ENCODE measurements at regions of chr4 and their contacts with region 1.

Region 1: DNA sequence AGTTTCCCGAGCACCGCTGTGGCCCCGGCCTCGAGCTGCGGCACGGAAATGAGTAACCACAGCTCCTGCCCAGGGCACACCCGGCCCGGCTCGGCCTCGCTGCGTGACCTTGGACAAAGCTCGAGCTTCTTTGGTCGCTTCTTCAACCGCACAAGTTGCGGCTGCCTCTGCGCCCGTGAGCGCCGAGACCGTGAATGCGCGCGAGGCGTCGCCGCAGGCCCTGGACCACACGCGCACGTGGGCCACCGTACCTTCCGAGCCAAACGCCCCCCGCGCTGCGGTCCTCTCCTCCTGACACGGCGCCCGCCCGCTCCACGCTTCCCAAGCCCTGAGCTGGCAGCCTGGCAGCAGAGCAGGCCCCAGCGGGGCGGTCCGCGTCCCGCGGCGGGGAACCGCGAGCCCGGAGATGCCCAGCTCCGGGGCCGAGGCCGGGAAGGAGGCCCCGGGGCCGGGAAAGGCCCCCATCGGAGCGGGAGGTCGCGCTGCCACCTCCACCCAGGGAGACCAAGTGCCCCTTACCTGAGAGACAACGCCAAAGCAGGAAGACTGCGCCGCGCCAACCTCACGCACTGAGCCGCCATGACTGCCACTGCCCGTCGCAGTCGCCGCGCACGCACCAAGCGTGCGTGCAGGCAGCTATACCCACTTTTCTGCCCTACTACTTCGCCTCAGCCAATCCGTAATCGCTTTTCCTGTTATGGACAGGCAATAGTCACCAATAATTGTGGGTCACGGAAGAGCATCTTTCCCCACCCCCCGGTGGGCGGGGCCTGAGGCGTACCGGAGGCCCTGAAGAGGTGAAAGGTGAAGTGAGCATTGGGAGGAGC is at the start of gene GRPEL1:
- DNase-seq: peak; percentile 96
- H3K4me3 ChIP-seq: peak within 1 kb of the TSS; percentile 89
- CTCF ChIP-seq: no peak

Region 2: DNA sequence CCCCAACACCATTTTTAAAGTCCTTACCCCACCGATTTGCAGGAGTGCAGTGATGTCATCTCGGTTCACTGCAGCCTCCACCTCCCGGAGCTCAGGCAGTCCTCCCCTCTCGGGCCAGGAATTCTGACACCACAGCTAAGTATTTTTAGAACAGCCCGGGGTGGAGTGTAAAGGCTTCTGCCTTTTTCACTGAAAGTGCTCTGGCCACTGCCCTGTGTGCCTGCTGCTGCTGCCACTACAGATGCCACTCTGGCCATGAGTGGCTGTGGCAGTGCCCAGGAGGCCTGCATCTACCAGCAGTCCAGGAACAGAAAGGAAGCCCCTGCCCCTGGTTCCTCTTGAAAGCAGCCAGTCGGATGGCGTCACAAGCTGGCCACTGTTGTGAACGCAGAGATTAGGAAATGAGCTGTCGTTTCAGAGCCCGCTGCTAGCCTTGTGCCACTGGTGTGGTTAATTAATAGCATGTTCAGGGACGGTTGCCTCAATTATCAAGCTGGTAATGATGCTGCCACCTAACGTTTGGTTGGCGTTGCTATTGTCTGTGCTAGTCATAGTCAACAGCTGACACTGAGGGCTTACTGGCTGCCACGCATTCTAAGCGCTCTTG is 181.6 kb before region 1 on chr4:
- CTCF ChIA-PET with region 1: interaction called, 12 read pairs
- POLR2A ChIA-PET with region 1: no interaction called
- DNase-seq: no peak
- H3K4me3 ChIP-seq: peak overlapping the region; percentile 23; the same call in 1 of the 2 replicates
- CTCF ChIP-seq: peak; percentile 39

Region 3: GRCh38 chr4:6974138-6974848 is 93.4 kb before region 1 on chr4:
- CTCF ChIA-PET with region 1: interaction called, 173 read pairs
- POLR2A ChIA-PET with region 1: interaction called, 5 read pairs
- DNase-seq: no peak
- H3K4me3 ChIP-seq: no peak overlapping the region
- CTCF ChIP-seq: peak; percentile 92

Region 4: GRCh38 chr4:7004331-7004730 is 63.3 kb before region 1 on chr4:
- CTCF ChIA-PET with region 1: interaction called, 12 read pairs
- POLR2A ChIA-PET with region 1: interaction called, 4 read pairs
- DNase-seq: peak; percentile 45
- H3K4me3 ChIP-seq: no peak overlapping the region
- CTCF ChIP-seq: no peak

Region 5: DNA sequence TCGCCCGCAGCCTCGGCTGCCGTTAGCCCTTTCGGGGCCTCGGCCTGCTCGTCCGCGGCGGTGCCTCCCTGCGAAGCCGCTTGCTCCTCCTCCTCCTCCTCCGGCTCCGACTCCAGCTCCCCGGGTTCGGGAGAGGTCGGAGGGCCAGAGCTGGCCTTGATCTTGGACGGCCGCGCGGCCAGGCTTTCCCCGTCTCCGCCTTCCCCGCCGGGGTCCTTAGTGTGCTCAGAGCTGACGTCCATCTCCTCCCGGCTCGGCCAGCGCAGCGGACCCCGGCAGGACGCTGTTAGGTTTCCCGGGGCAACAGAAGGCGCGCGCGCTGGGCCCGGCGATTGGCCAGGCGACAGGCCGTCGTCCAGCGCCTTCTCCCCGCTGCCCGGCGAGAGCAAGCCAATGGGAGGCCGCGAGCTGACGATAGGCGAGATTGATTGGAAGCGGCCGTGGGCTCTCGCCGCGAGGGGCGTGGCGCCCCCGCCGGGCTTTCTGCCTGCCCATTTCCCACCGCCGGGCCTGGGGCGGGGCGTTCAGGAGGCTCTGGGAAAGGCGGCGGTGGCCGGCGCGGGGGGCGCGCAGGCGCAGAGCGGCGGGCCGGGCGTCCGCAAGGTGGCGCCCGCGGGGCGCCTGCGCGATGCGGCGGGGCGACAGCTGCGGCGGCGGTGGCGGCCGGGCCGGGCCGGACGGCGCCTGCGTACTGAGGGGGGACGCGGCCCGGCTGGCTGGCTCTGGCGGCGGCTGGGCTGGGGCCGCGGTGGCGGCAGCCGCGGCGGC is 24.8 kb before region 1 on chr4 and contains the start of gene TADA2B:
- CTCF ChIA-PET with region 1: interaction called, 101 read pairs
- POLR2A ChIA-PET with region 1: interaction called, 8 read pairs
- DNase-seq: peak; percentile 74
- H3K4me3 ChIP-seq: peak within 1 kb of the TSS; percentile 80
- CTCF ChIP-seq: peak; percentile 12

Region 6: DNA sequence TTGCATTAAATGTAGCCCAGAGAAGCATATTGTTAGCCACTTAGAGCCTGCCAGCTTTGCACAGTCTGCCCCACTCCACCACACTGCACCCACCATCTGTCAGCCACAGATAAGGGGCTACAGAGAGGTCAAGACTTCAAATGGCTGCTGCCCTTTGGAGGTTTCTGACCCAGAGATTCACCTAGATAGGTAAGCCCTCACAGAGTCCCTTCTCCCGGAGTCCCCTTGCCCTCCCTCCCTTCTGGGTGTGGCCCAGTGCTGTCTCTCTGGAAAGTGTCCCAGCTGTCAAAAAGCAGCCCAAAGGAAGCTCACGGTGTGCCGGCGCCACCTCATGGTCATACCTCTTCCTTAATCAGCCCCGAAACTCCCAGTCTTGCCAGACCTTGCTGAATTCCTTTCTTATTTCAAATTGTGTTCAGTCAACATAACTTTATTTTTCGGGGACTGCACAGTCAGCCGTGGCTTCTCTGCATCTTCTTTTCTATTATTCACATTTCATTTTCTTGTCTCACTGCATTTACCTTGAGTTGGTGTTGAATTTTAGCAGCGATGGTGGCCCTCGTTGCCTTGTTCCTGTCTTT is 14.3 kb after region 1 on chr4:
- CTCF ChIA-PET with region 1: interaction called, 87 read pairs
- POLR2A ChIA-PET with region 1: no interaction called
- DNase-seq: no peak
- H3K4me3 ChIP-seq: no peak overlapping the region
- CTCF ChIP-seq: peak; percentile 41

Region 7: DNA sequence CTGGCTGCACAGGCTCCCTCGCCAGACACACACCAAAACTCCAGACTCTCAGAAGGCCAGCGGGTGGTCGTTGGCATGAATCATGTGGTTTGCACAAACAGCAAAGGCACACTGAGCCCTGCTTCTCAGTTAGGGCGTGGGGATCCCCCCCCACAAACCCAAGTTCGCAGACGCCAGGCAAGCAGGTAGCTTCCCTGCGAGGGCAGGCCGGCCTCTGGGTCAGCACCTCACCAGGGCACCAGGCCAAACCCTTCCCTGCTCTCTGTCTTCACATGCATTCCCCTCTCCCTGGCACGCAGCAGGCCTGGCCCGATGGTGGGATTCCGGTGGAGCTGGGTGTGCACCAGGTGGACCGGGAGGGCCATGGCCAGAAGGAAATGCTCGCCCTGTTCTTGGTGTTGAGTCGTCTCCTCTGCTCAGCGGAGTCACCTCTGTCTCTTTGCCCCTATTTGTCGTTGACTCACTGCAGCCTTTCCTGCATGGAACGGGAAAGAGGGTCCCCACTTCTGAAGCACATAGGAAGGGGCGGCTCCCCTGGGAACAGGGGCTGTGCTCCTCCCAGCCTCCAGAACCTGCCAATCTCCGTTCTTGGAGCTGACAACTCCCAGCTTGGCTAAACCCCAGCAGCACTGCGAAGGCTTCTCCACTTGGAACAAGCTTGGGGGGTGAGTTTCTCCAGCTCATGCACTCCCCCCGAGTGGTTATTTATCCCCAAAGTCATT is 176.1 kb after region 1 on chr4:
- CTCF ChIA-PET with region 1: no interaction called
- POLR2A ChIA-PET with region 1: no interaction called
- DNase-seq: no peak
- H3K4me3 ChIP-seq: no peak overlapping the region
- CTCF ChIP-seq: no peak

Measured in AG04449 (cell line).